ENCODE measurements at regions of chr6 and their contacts with region 1.

Region 1: GRCh38 chr6:105179244-105180065 is at the start of gene POPDC3:
- DNase-seq: no peak
- total RNA-seq, gene POPDC3: 35.1 TPM

Region 2: DNA sequence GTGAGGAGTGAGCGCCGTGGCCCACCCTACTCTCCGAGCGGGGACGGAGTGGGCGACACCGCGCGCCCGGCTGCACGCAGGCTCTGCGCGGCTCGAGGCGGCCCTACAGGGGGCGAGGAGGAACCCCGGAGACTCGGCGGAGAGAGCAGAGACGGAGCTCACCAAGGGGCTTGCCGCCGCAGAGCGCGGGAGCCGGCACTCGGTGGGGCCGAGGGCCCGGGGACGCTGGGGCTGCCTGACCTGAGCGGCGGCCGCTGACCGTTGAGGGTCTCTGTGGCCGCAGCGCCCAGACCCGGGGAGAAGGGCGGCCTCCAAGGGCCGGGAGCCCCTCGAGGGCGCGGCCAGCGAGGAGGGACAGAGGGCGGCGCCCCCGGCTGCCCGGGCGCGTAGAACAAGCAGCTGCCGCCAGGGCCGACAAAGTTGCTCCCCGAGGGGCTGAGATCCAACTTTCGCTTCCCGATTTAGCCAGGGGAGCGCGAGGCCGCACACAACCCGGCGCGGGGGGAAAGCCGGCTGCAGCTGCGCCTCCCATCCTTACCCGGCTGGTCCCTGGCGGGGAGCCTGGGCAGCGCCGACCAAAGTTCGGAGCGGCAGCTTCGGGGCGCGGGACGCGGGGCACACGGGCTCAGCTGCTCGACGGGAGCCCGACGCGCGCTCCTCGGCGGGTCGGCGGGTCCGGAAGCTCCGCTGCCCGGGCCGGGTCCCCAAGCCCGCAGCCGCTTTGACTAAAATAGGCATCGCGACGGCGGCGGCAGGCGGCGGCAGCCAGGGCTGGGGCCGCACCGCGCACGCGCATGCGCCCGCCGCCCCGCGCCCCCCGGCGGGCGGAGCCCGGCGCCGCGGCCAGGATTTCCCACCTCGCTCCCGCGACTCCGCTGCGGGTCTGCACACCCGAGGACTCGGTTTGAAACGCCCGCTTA is 42.8 kb before region 1 on chr6:
- intact Hi-C with region 1: loop called (anchors 2 kb)
- DNase-seq: peak; percentile 81